BJ (cell line): ENCODE measurements at regions of chr19 and their contacts with region 1.

Region 1: DNA sequence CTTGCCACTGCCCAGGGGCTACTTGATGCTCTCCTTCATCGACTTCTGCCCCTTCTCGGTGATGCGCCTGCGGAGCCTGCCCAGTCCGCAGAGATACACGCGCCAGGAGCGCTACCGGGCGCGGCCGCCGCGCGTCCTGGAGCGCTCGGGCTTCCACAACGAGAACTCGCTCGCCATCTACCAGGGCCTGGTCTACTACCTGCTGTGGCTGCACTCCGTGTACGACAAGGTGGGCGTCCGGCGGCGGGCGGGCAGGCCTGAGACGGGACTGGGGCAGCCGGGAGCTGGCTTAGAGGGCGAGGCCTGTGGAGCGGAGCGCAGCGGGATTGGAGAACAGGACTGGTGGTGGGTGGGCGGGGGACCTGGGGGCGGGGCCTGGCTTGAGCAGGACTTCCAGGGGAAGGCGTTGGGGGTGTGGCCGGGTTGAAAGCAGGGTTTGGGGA is 12.7 kb upstream of the PSMD8 start:
- DNase-seq: no peak
- H3K4me3 ChIP-seq: peak overlapping the region; percentile 54
- H3K27me3 ChIP-seq: peaks cover 15% of the 10 kb centered on the region
- CTCF ChIP-seq: peak; percentile 35; the same call in 1 of the 2 replicates

Region 2: DNA sequence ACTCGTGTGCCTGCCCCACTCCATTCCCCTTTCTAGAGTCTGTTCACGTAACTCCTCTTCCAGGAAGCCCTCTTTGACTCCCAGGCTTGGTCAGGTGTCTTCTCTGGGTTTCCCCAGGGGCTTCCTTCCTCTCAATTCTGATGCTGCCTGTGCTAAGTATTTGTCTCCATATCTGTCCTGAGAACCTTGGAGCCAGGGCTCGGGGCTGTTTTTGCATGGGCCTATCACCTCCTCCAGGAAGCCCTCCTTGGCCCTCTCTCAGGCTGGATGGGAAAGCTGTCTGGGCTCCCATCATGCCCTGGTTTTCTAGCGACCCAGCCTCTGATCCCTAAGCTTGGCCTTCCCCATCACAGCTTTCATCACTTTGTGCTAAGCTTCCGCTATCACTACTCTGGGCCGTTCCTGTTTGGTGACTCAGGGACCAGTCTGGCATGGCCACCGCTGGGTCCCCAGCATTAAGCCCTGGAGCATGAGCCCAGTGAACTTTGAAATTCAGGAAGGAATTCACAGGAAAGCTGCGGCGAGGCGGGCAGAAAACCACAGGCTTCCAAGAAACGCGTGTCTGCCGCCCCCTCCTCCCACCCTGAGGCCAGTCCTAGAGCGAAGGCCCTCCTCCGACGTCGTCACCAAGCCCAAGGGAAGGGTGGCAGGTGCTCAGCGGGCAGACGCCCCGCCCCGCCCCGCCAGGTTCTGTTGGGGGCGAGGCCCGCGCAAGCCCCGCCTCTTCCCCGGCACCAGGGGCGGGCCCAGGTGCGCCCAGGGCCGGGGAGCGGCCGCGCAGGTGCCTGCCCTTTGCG is 97.8 kb before region 1 on chr19:
- CTCF ChIA-PET with region 1: no interaction called
- POLR2A ChIA-PET with region 1: no interaction called
- DNase-seq: no peak
- H3K4me3 ChIP-seq: peak overlapping the region; percentile 43
- H3K27me3 ChIP-seq: no peaks in the 10 kb centered on the region
- CTCF ChIP-seq: no peak

Region 3: DNA sequence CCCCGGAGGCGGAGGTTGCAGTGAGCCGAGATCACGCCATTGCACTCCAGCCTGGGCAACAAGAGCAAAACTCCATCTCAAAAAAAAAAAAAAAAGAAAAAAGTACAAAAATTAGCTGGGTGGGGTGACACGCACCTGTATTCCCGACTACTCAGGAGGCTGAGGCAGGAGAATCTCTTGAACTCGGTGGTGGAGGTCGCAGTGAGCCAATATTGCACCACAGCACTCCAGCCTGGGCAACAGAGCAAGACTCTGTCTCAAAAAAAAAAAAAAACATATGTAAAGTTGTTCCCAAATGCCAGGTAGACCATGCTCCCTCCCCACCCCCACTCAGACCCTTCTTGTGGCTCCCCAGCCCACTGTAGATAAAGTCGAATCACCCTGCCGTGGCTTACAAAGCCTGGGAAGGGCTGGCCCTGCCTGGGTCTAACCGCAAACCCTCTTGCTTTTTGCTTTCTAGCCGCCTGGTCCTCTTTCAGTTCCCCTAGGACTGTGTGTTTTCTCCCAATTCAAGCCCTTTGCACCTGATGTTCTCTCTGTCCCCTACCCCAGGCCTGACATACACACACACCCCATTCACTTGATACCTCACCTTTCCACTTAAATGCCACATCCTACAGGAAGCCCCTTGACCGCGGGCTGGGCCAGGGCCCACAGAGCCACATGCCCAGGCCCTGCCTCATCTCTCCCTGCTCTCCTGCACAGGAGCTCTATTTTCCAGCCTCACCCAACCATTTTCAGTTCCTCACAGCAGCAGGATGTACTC is 221.7 kb after region 1 on chr19:
- CTCF ChIA-PET with region 1: no interaction called
- POLR2A ChIA-PET with region 1: interaction called, 12 read pairs
- DNase-seq: no peak
- H3K4me3 ChIP-seq: no peak overlapping the region
- H3K27me3 ChIP-seq: no peaks in the 10 kb centered on the region
- CTCF ChIP-seq: no peak